Naive thymus-derived CD4-positive, alpha-beta T cell (primary cell): ENCODE measurements at regions of chr3 and their contacts with region 1.

Region 1: GRCh38 chr3:72818092-72818773 is 30.0 kb downstream of the SHQ1 start:
- DNase-seq: peak in 1 of 9 donors; percentile 4
- ATAC-seq: no peak
- H3K4me3 ChIP-seq: no peak overlapping the region
- H3K4me3 Mint-ChIP-seq: no peak overlapping the region
- H3K27ac ChIP-seq: no peak overlapping the region
- H3K27ac Mint-ChIP-seq: peak overlapping the region in 2 of 9 donors; percentile 14 to 56
- H3K4me1 ChIP-seq: peaks cover 0 to 25% of the 10 kb centered on the region in 2 donors
- H3K4me1 Mint-ChIP-seq: peaks cover 0 to 14% (median 8%) of the 10 kb centered on the region in 7 donors
- H3K27me3 ChIP-seq: no peaks in the 10 kb centered on the region
- H3K27me3 Mint-ChIP-seq: no peaks in the 10 kb centered on the region

Region 2: DNA sequence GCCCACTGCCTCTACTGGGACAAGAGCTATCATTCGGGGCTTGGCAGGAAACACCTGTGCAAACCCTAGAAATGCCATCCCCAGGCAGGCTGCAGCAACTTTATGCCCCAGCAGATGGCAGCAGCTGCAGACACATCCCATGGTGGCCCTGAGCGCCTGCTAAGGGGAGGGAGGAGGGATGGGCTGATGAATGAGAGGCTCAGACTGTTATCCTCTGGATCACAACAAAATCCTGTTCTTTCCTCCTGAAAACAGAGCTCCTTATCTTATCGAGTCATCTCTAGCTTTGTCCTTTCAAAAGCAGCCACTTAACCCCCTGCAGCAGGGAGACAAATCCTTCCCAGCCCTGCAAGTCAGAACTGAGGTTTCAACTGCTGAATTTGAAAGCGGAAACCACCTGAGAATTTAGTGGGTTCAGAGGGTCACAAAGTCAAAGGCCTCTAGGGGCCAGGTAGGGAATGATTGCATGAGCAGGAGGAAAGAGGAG is 942.7 kb before region 1 on chr3:
- CTCF ChIA-PET with region 1: interaction called, 57 read pairs
- POLR2A ChIA-PET with region 1: no interaction called
- intact Hi-C with region 1: loop called (anchors 1 kb)
- DNase-seq: peak; percentile 55 to 81 (median 73)
- ATAC-seq: peak; percentile 98
- H3K4me3 ChIP-seq: no peak overlapping the region
- H3K4me3 Mint-ChIP-seq: no peak overlapping the region
- H3K27ac ChIP-seq: no peak overlapping the region
- H3K27ac Mint-ChIP-seq: no peak overlapping the region
- H3K4me1 ChIP-seq: no peaks in the 10 kb centered on the region
- H3K4me1 Mint-ChIP-seq: peaks cover 0 to 20% (median 10%) of the 10 kb centered on the region in 7 donors
- H3K27me3 ChIP-seq: no peaks in the 10 kb centered on the region
- H3K27me3 Mint-ChIP-seq: peaks cover 0 to 4% (median 0%) of the 10 kb centered on the region in 5 donors

Region 3: DNA sequence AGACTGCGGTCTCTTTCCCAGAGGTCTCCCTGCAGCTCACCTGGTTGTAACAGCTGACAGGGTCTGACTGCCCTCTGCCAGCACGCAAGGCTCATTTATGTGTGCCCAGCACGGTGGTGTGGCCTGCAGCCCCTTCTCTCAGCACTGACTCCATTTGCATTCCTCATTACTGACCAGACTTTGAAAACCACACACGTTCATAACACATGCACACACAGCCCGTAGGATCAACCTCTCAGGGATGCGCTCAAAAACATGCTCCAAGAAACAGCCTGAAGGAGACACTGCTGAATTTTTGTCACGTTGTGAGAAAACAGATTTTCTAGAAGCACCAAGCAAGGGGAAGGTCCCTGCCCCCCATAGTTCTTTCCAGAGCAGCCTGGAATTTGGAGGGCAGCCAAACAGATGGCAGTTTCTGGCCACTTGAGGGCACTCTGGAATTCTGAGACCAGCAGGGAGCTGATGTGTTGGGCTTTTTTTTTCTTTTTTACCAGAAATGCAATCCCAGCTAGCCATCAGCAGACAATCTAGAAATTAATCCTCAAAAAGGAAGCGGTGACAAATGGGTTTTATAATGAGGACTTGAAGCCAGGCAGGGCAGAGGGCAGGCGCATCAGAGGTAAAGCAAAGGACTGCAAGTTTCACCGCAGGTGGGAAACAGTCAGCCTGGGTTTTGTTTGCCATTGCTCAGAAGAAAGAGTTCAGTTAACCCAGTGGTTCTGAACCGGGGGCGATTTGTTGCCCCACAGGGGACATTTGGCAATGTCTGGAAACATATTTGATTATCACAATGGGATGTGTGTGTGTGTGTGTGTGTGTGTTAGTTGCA is 862.8 kb before region 1 on chr3:
- CTCF ChIA-PET with region 1: interaction called, 9 read pairs
- POLR2A ChIA-PET with region 1: no interaction called
- intact Hi-C with region 1: loop called (anchors 1 to 10 kb)
- DNase-seq: peak in 3 of 9 donors; percentile 5 to 27 (median 17)
- ATAC-seq: no peak
- H3K4me3 ChIP-seq: no peak overlapping the region
- H3K4me3 Mint-ChIP-seq: no peak overlapping the region
- H3K27ac ChIP-seq: no peak overlapping the region
- H3K27ac Mint-ChIP-seq: peak overlapping the region in 1 of 9 donors; percentile 28
- H3K4me1 ChIP-seq: no peaks in the 10 kb centered on the region
- H3K4me1 Mint-ChIP-seq: peaks cover 0 to 43% (median 13%) of the 10 kb centered on the region in 7 donors
- H3K27me3 ChIP-seq: no peaks in the 10 kb centered on the region
- H3K27me3 Mint-ChIP-seq: no peaks in the 10 kb centered on the region

Region 4: GRCh38 chr3:72347819-72348319 is 470.4 kb before region 1 on chr3:
- CTCF ChIA-PET with region 1: interaction called, 4 read pairs
- POLR2A ChIA-PET with region 1: no interaction called
- intact Hi-C with region 1: loop called in 1 of 2 experiments (anchors 5 kb)
- DNase-seq: peak in 5 of 9 donors; percentile 37 to 44 (median 41)
- ATAC-seq: peak; percentile 44
- H3K4me3 ChIP-seq: no peak overlapping the region
- H3K4me3 Mint-ChIP-seq: peak overlapping the region in 7 of 10 donors; percentile 11 to 71 (median 60)
- H3K27ac ChIP-seq: peak overlapping the region; percentile 22
- H3K27ac Mint-ChIP-seq: peak overlapping the region in 8 of 9 donors; percentile 70 to 90 (median 86)
- H3K4me1 ChIP-seq: peaks cover 3 to 63% of the 10 kb centered on the region in 2 donors
- H3K4me1 Mint-ChIP-seq: peaks cover 37 to 69% (median 64%) of the 10 kb centered on the region in 7 donors
- H3K27me3 ChIP-seq: no peaks in the 10 kb centered on the region
- H3K27me3 Mint-ChIP-seq: peaks cover 0 to 12% (median 0%) of the 10 kb centered on the region in 5 donors

Region 5: GRCh38 chr3:72657666-72658065 is 160.6 kb before region 1 on chr3:
- CTCF ChIA-PET with region 1: interaction called, 242 read pairs
- POLR2A ChIA-PET with region 1: interaction called, 5 read pairs
- intact Hi-C with region 1: no loop called
- DNase-seq: peak in 8 of 9 donors; percentile 19 to 86 (median 75)
- ATAC-seq: peak; percentile 96
- H3K4me3 ChIP-seq: no peak overlapping the region
- H3K4me3 Mint-ChIP-seq: peak overlapping the region in 6 of 10 donors; percentile 22 to 72 (median 41)
- H3K27ac ChIP-seq: no peak overlapping the region
- H3K27ac Mint-ChIP-seq: peak overlapping the region in 2 of 9 donors; percentile 1 to 6
- H3K4me1 ChIP-seq: peaks cover 0 to 9% of the 10 kb centered on the region in 2 donors
- H3K4me1 Mint-ChIP-seq: peaks cover 12 to 38% (median 19%) of the 10 kb centered on the region in 7 donors
- H3K27me3 ChIP-seq: no peaks in the 10 kb centered on the region
- H3K27me3 Mint-ChIP-seq: peaks cover 6 to 12% (median 7%) of the 10 kb centered on the region in 5 donors

Region 6: DNA sequence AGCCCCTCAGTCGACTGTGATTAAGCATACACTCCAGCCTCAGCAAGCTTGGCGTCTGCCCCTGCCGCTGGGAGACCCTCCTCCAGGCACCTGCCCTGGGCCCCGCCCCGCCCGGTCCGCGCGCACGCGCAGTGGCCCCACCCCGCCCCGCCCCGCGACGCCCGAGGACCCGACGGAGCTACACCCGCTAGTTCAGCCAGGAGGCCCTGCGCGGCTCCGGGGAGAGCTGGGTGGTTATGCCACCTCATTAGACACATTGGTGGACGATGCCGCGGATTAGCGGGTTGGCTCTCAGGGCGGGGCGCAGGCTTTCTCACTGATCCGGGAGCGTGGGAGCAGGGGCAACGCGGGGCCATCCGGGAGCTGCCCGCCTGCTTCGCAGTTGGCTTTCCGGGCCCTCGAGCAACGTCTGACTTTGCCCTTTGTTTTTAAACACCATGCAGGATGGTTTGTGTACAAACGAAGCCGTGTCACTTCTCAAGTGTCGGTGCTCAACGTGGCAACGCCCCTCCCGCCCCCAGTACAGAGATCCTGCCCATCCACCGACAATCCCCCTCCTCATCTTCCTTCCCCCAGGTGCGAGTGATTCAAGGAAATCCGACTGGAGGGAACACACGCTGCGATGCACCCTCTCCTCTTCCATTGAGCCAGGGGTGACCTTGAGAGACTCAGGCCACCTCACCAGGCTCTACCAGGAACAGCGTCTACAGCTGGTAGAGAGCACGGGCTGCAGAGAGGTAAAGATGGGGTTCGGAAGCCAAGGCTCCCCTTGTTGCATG is 79.3 kb before region 1 on chr3:
- CTCF ChIA-PET with region 1: interaction called, 31 read pairs
- POLR2A ChIA-PET with region 1: interaction called, 73 read pairs
- intact Hi-C with region 1: loop called in 1 of 2 experiments (anchors 1 kb)
- DNase-seq: peak; percentile 68 to 84 (median 76)
- ATAC-seq: peak; percentile 93
- H3K4me3 ChIP-seq: peak overlapping the region; percentile 80
- H3K4me3 Mint-ChIP-seq: peak overlapping the region; percentile 81 to 96 (median 94)
- H3K27ac ChIP-seq: peak overlapping the region; percentile 81
- H3K27ac Mint-ChIP-seq: peak overlapping the region; percentile 89 to 99 (median 97)
- H3K4me1 ChIP-seq: peaks cover 4 to 21% of the 10 kb centered on the region in 2 donors
- H3K4me1 Mint-ChIP-seq: peaks cover 15 to 35% (median 32%) of the 10 kb centered on the region in 7 donors
- H3K27me3 ChIP-seq: no peaks in the 10 kb centered on the region
- H3K27me3 Mint-ChIP-seq: peaks cover 0 to 3% (median 0%) of the 10 kb centered on the region in 5 donors

Region 7: DNA sequence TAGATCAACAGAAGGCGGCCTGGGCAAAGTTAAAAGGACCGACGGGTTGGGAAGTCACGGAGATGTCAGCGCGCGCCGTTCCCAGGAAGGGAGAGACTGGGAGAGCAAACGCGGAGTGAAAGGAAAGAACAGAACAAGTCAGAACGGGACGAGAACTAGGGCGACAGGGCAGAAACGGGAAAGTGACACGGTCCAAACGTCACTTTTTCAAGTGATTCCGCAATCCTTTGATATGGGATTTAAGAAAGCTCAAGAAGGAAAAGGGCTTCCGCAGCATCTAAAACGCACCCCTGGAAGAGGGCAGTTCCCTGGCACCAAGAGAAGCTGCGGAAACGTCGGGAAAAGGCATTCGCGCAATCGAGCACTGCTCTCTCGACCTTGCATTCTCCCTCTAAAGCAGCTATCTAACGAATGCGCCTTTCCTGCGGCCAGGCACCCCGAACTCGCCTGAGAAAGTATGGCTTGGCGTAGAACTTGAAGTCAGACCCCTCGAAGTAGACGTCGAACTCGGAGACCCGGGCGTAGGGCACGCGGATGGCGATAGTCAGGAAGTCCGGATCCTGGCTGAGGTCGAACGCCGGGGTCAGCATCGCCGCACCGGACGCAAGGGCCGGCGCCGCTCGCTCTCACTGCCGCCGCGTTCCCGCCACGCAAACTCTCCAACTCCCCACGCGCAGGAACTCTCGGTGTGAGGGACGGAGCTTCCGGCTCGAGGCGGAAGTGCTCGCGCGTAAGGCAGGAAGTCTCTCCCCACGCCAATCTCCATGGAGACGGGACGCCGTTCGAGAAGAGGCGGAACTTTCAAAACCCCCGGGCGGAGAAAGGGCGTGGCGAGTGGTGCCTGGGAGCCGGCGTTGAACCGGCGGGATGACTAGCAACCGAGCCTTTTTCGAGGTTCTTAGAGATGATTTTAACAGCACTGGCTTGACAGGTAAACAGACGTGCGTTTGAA is 29.8 kb after region 1 on chr3 and contains the start of gene SHQ1:
- CTCF ChIA-PET with region 1: no interaction called
- POLR2A ChIA-PET with region 1: interaction called, 3 read pairs
- intact Hi-C with region 1: loop called in 1 of 2 experiments (anchors 1 kb)
- DNase-seq: peak; percentile 87 to 94 (median 92)
- ATAC-seq: peak; percentile 96
- H3K4me3 ChIP-seq: peak within 1 kb of the TSS; percentile 92
- H3K4me3 Mint-ChIP-seq: peak within 1 kb of the TSS; percentile 93 to 100 (median 98)
- H3K27ac ChIP-seq: peak within 1 kb of the TSS; percentile 71
- H3K27ac Mint-ChIP-seq: peak within 1 kb of the TSS; percentile 80 to 92 (median 89)
- H3K4me1 ChIP-seq: peaks cover 14 to 16% of the 10 kb centered on the region in 2 donors
- H3K4me1 Mint-ChIP-seq: peaks cover 34 to 67% (median 51%) of the 10 kb centered on the region in 7 donors
- H3K27me3 ChIP-seq: no peaks in the 10 kb centered on the region
- H3K27me3 Mint-ChIP-seq: peaks cover 0 to 7% (median 0%) of the 10 kb centered on the region in 5 donors
- total RNA-seq, gene SHQ1: 14.1 to 34.3 (median 24.5) TPM